Lower leg skin (tissue), 4 donors: ENCODE measurements at regions of chr5 and their contacts with region 1.

Region 1: DNA sequence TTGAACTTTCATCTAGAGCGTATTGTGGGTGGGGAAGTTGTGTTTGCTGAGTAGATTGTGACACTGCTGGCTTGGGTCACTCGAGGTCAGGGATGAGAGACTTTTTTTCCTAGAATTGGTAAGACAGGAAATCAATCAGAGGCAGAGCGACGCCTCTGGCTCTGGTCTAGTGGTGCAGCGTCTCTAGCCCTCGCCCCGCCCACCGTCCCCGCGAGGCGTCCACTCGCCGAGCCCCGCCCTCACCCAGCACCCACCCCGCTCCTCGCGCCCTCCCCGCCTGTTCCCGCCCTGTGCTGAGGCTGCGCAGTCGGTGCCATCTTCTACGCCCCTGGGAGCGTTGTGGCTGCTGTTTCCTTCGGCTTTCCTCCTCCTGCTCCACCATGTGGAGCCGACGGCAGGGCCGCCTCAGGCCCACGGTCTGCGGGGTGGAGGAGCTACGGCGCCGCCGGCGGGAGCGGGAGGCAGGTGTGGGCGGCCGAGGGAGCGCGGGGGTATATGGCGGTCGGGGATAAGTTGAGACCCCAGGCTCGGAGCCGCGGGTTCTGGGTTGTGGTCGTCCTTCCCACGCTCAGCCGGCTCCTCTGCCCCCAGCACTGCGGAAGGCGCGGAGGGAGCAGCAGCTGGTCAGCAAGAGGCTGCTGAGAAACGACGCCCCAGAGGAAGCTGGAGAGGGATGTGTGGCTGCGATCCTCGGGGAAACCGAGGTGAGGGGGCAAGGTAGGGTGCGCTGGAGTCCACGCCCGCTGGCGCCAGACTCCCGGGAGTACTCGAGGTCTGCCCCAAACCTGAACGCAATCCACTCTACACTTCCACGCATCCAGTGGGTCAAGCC is at the start of gene TMCO6:
- DNase-seq: peak; percentile 97 to 100
- H3K4me3 ChIP-seq: peak within 1 kb of the TSS; percentile 78
- CTCF ChIP-seq: peak in 1 of 3 donors; percentile 45
- POLR2A ChIP-seq: no peak
- total RNA-seq, gene TMCO6: 60.3 to 99.8 (median 67.3) TPM

Region 2: GRCh38 chr5:140145818-140146522 is 493.4 kb before region 1 on chr5:
- intact Hi-C with region 1: no loop called
- DNase-seq: peak; percentile 48 to 92
- H3K4me3 ChIP-seq: no peak overlapping the region
- CTCF ChIP-seq: no peak
- POLR2A ChIP-seq: no peak

Region 3: GRCh38 chr5:140362860-140363630 is 276.3 kb before region 1 on chr5:
- intact Hi-C with region 1: loop called (anchors 10 kb)
- DNase-seq: peak; percentile 59 to 95
- H3K4me3 ChIP-seq: no peak overlapping the region
- CTCF ChIP-seq: peak in 2 of 3 donors; percentile 45 to 84
- POLR2A ChIP-seq: no peak

Region 4: DNA sequence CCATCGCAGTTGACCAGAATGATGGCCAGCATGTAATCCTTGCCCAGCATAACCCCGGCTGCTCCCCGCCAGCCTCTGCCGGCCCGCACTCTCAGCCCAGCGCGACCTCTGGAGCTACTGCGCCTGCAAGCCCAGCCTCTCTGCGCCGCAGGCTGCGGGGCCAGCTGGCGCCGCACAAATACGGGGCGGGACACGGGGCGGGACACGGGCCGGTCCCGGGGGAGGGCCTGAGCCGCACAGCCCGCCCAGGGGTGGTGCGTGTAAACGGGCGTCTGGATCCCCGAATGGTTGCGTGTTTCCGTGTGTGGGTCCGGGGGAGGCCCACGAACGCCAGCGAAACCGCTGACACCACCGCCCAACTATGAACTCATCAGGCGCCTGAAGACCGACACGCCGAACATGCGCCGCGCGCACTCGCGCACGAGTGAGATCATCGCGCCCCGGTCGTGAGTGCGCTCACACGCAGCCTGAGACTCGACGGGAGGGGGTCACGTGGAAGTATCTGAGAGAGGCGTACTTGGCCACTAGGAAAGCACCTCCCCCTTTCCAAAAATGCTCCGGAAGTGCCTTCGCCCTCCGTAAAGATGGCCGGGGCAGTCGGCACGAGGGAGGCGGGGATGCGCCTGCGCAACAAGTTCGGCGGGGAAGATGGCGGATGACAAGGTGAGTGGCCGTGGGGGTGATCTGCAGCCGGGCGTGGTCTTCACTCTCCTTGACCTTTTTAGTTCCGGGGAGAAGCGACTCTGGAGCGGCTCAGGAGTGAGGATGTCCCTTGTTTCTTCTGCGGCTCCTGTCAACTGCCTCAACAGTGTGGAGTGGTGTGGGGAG is 75.0 kb before region 1 on chr5 and contains the starts of genes APBB3 and SLC35A4:
- intact Hi-C with region 1: loop called (anchors 10 kb)
- DNase-seq: peak; percentile 98 to 99
- H3K4me3 ChIP-seq: peak within 1 kb of the TSS; percentile 30
- CTCF ChIP-seq: no peak
- POLR2A ChIP-seq: peak in 1 of 2 donors; percentile 47
- total RNA-seq, gene APBB3: 14.0 to 23.7 (median 19.2) TPM
- total RNA-seq, gene SLC35A4: 59.7 to 86.4 (median 68.2) TPM

Region 5: DNA sequence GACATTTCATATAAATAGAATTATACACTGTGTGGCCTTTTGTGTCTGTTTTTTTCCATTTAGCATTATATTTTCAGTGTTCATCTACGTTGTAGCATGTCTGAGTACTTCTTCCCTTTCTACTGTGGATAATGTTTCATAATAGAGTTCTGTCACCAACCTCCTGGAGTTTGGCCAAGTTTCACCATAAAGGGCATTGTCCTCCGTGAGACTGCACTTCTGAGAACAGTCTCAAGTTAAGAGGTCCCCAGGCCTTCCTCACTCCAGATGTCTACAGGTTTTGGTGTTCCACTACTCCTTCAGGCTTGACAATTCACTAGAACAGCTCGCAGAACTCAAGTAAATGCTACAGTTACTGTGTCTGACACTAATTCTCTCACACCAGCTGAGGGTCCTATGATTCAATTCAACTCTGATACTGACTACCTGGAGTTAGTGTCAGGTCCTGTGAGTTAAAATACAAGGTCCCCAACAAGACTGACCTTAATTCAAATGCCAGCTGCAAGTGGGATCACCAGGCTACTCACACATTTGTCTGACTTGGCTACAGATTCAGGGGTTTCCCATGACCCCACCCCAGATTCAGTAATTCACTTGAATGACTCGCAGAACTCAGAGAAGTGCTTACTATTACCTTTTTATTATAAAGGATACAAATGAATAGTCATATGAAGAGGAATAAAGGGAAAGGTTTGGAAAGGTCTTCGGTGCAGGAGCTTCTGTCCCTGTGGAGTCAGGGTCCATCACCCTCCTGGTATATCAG is 43.6 kb before region 1 on chr5:
- intact Hi-C with region 1: no loop called
- DNase-seq: peak in 1 of 2 donors; percentile 60
- H3K4me3 ChIP-seq: no peak overlapping the region
- CTCF ChIP-seq: no peak
- POLR2A ChIP-seq: no peak